Activated CD8-positive, alpha-beta T cell treated with anti-CD3 and anti-CD28 coated beads for 36 hours (primary cell): ENCODE measurements at regions of chr9 and their contacts with region 1.

Region 1: GRCh38 chr9:129139993-129140396 is 28.8 kb downstream of the PTPA start:
- DNase-seq: peak; percentile 92
- ATAC-seq: peak; percentile 91
- H3K4me3 Mint-ChIP-seq: peak overlapping the region; percentile 80
- H3K27ac Mint-ChIP-seq: peak overlapping the region; percentile 93
- H3K4me1 Mint-ChIP-seq: peaks cover 42% of the 10 kb centered on the region
- H3K27me3 Mint-ChIP-seq: no peaks in the 10 kb centered on the region
- CTCF ChIP-seq: no peak

Region 2: GRCh38 chr9:128818099-128818838 is 321.7 kb before region 1 on chr9 and contains the start of gene ENDOG:
- CTCF ChIA-PET with region 1: no interaction called
- POLR2A ChIA-PET with region 1: no interaction called
- intact Hi-C with region 1: no loop called
- DNase-seq: peak; percentile 98
- ATAC-seq: peak; percentile 97
- H3K4me3 Mint-ChIP-seq: peak within 1 kb of the TSS; percentile 80
- H3K27ac Mint-ChIP-seq: peak within 1 kb of the TSS; percentile 84
- H3K4me1 Mint-ChIP-seq: peaks cover 19% of the 10 kb centered on the region
- H3K27me3 Mint-ChIP-seq: no peaks in the 10 kb centered on the region
- CTCF ChIP-seq: peak; percentile 94
- total RNA-seq, gene ENDOG: 21.8 to 23.9 TPM

Region 3: DNA sequence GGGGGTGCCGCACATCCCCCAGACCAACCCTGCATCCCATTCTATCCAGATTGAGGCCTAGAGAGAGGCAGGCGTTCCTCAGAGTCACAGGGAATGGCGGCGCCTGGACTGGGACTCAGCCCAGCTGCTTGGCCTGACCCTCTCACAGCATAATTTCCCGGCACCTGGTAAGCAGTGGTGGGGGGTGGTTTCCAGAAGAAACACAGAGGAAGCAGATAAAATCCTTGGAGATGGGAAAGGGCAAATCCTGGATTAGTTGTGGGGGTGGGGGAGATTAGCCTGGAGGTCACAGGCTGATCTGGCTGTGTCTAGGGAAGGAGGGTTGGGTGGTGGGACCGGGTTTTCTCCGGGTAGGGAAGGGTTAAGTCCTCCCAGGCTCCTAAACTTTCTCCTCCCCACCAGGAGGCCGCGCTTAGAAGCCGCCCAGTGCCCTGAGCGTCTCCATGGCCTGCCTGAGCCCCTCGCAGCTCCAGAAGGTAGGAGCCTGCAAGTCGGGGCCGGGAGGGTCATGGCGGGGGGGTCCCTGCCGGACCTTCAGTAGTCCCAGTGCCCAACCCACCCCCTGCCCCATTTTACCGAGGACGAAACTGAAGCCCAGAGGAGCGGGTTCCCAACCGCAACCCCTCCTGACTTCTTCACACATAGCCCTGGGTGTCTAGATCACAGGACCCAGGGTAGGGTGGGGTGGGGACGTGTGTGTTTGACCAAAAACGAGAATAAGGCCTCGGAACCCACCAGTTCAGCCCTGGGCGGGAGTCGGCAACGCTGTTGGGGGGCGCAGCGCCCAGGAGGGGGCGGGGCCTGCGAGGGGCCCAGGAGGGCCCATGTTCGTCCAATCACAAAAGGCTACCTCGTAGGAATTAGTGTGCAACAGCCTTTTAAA is 217.9 kb before region 1 on chr9:
- CTCF ChIA-PET with region 1: no interaction called
- POLR2A ChIA-PET with region 1: no interaction called
- intact Hi-C with region 1: no loop called
- DNase-seq: peak; percentile 53
- ATAC-seq: peak; percentile 88
- H3K4me3 Mint-ChIP-seq: no peak overlapping the region
- H3K27ac Mint-ChIP-seq: no peak overlapping the region
- H3K4me1 Mint-ChIP-seq: peaks cover 10% of the 10 kb centered on the region
- H3K27me3 Mint-ChIP-seq: no peaks in the 10 kb centered on the region
- CTCF ChIP-seq: no peak

Region 4: GRCh38 chr9:128940271-128940921 is 199.6 kb before region 1 on chr9:
- CTCF ChIA-PET with region 1: no interaction called
- POLR2A ChIA-PET with region 1: no interaction called
- intact Hi-C with region 1: no loop called
- DNase-seq: no peak
- ATAC-seq: no peak
- H3K4me3 Mint-ChIP-seq: no peak overlapping the region
- H3K27ac Mint-ChIP-seq: no peak overlapping the region
- H3K4me1 Mint-ChIP-seq: no peaks in the 10 kb centered on the region
- H3K27me3 Mint-ChIP-seq: no peaks in the 10 kb centered on the region
- CTCF ChIP-seq: no peak

Region 5: DNA sequence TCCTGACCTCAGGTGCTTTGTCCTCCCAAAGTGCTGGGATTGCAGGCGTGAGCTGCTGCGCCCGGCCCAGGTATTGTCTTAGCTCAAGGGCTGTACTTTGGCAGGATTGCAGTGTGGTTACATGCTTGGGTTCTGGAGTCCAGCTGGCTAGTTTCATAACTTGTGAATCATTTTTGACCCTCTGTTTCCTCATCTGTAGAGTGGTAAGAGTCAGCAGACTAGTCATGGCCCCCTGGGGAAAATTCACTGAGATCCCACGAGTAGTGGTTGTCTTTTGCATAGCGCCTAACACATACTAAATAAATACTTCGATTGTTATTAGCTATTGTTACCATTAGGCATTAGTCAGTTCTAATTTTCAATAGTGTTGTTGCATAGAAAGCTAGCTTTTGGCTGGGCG is 14.5 kb before region 1 on chr9:
- CTCF ChIA-PET with region 1: interaction called, 116 read pairs
- POLR2A ChIA-PET with region 1: interaction called, 4 read pairs
- intact Hi-C with region 1: no loop called
- DNase-seq: no peak
- ATAC-seq: no peak
- H3K4me3 Mint-ChIP-seq: no peak overlapping the region
- H3K27ac Mint-ChIP-seq: no peak overlapping the region
- H3K4me1 Mint-ChIP-seq: no peaks in the 10 kb centered on the region
- H3K27me3 Mint-ChIP-seq: no peaks in the 10 kb centered on the region
- CTCF ChIP-seq: no peak

Region 6: DNA sequence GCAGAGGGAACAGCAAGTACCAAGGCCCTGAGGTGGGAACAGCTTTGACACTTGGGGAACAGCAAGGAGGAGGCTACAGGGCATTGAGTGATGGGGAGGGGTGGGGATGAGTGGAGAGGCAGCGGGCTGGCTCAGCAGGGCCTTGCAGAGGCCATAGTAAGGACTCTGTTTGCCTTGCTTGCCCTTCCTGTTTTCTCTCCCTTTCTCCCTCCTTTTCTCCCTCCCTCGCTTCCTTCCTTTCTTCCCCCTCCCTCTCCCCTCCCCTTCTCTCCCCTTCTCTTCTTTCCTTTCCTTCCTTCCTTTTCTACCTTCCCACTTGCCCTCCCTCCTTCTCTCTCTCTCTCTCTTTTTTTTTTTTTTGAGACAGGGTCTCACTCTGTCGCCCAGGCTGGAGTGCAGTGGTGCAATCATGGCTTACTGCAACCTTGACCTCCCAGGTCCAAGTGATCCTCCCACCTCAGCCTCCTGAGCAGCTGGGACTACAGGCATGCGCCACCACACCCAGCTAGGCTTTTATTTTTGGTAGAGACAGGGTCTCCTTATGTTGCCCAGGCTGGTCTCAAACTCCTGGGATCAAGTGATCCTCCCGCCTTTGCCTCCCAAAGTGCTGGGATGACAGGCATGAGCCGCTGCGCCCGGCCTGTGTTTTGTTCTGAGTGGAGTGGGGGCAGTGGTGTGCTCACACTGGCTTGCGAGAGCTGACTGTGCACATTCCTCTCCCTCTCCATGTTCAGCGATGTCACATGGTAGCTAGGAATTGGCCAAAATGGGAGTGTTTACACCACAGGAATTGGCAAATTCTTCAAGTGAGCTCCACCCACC is 20.9 kb after region 1 on chr9:
- CTCF ChIA-PET with region 1: interaction called, 31 read pairs
- POLR2A ChIA-PET with region 1: interaction called, 3 read pairs
- intact Hi-C with region 1: no loop called
- DNase-seq: no peak
- ATAC-seq: no peak
- H3K4me3 Mint-ChIP-seq: no peak overlapping the region
- H3K27ac Mint-ChIP-seq: no peak overlapping the region
- H3K4me1 Mint-ChIP-seq: no peaks in the 10 kb centered on the region
- H3K27me3 Mint-ChIP-seq: no peaks in the 10 kb centered on the region
- CTCF ChIP-seq: no peak

Region 7: GRCh38 chr9:129177791-129178559 is 38.0 kb after region 1 on chr9 and contains the start of gene IER5L:
- CTCF ChIA-PET with region 1: interaction called, 65 read pairs
- POLR2A ChIA-PET with region 1: interaction called, 8 read pairs
- intact Hi-C with region 1: no loop called
- DNase-seq: peak; percentile 96
- ATAC-seq: peak; percentile 86
- H3K4me3 Mint-ChIP-seq: peak within 1 kb of the TSS; percentile 89
- H3K27ac Mint-ChIP-seq: peak within 1 kb of the TSS; percentile 34
- H3K4me1 Mint-ChIP-seq: peaks cover 1% of the 10 kb centered on the region
- H3K27me3 Mint-ChIP-seq: peaks cover 6% of the 10 kb centered on the region
- CTCF ChIP-seq: no peak
- total RNA-seq, gene IER5L: 3.7 to 4.1 TPM

Region 8: GRCh38 chr9:129584136-129584535 is 444.1 kb after region 1 on chr9:
- CTCF ChIA-PET with region 1: interaction called, 11 read pairs
- POLR2A ChIA-PET with region 1: no interaction called
- intact Hi-C with region 1: no loop called
- DNase-seq: peak; percentile 80
- ATAC-seq: peak; percentile 36
- H3K4me3 Mint-ChIP-seq: no peak overlapping the region
- H3K27ac Mint-ChIP-seq: peak overlapping the region; percentile 73
- H3K4me1 Mint-ChIP-seq: peaks cover 68% of the 10 kb centered on the region
- H3K27me3 Mint-ChIP-seq: no peaks in the 10 kb centered on the region
- CTCF ChIP-seq: no peak

Region 9: DNA sequence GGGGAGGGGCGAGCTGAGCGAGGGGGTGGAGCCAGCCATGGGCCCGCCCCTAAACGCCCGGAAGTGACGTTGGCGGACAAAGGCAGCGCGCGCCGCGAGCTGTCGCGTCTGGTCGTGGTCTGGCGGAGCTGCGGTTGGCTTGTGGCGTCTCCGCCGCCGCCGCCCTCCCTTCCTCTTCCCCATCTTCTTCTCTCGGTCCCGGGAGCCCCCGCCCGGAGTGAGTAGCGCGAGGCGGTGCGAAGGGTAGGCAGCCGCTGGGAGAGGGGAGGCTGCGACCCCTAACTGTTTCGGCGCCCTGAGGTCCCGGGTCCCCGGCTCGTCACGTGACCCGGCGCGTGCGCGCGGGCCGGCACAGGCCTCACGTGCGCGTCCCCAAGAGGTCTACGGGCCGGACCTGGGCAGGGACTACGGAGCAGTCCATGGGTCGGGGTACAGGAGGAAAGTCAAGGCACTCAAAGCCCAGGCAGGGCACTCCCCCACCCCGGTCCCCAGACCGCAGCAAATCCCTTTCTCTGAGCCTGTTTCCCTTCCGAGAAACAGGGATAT is 486.2 kb after region 1 on chr9 and contains the start of gene NTMT1:
- CTCF ChIA-PET with region 1: interaction called, 131 read pairs
- POLR2A ChIA-PET with region 1: interaction called, 9 read pairs
- intact Hi-C with region 1: no loop called
- DNase-seq: peak; percentile 90
- ATAC-seq: peak; percentile 83
- H3K4me3 Mint-ChIP-seq: peak within 1 kb of the TSS; percentile 77
- H3K27ac Mint-ChIP-seq: peak within 1 kb of the TSS; percentile 95
- H3K4me1 Mint-ChIP-seq: peaks cover 52% of the 10 kb centered on the region
- H3K27me3 Mint-ChIP-seq: peaks cover 4% of the 10 kb centered on the region
- CTCF ChIP-seq: no peak
- total RNA-seq, gene NTMT1: 69.5 to 74.4 TPM